ENCODE measurements at regions of chr19 and their contacts with region 1.

Region 1: DNA sequence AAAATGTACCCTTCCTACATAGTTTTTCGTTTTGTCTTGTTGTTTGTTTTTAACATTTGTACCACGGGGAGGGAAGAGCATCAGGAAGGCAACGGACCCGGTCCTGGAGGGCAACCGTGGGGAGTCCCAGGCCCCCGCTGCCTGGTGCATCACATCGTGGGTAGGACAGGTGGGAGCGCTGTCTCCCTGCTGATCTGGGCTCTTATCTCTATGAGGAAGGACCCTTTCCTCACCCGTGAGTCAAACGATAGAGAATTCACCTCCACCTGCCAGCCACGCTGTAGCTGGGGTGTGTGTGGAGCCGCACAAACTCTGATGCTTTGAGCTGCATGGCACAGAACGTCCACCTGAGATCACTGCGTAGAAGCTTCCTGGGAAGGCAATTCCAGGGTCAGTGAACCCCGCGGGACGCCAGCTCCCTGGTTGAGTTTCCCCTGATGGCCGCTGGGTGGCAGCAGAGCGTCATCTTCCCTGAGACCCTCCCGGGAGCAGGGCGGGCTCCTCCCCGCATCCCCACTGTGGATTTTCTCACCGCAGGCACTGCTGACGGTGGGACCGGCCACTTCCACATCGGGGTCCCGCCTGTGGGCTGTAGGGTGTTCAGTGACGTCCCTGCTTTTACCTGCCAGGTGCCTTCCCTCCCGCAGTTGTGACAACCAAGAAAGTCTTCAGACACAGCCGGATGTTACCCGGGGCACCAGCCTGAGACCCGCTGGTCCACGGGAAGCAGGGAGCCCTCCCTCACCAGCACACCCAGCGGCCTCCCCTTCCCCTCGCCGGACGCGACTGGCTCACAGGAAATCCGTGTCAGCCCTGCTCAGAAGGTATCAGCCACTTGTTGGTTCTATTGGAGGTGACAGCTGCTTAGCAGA is 54.7 kb downstream of the ZNF787 start:
- DNase-seq: peak; percentile 84
- CTCF ChIP-seq: peak; percentile 93

Region 2: DNA sequence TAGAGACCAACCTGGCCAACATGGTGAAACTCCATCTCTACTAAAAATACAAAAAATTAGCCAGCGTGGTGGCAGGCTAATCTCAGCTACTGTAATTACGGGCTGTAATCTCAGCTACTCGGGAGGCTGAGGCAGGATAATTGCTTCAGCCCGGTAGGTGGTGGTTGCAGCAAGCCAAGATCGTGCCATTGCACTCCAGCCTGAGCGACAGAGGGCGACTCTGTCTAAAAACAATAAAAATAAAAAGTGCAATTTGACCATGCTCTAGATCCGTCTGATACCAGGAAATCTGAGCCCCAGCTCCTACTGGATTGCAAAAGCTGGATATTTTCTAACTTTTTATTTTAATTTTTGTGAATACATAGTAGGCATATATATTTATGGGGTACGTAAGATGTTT is 99.8 kb before region 1 on chr19:
- CTCF ChIA-PET with region 1: no interaction called
- POLR2A ChIA-PET with region 1: no interaction called
- DNase-seq: no peak
- CTCF ChIP-seq: no peak

Region 3: GRCh38 chr19:56053596-56053995 is 12.8 kb before region 1 on chr19:
- CTCF ChIA-PET with region 1: interaction called, 12 read pairs
- POLR2A ChIA-PET with region 1: no interaction called
- DNase-seq: no peak
- CTCF ChIP-seq: no peak

Region 4: GRCh38 chr19:56104423-56104822 is 38.0 kb after region 1 on chr19:
- CTCF ChIA-PET with region 1: no interaction called
- POLR2A ChIA-PET with region 1: no interaction called
- DNase-seq: no peak
- CTCF ChIP-seq: no peak

Region 5: DNA sequence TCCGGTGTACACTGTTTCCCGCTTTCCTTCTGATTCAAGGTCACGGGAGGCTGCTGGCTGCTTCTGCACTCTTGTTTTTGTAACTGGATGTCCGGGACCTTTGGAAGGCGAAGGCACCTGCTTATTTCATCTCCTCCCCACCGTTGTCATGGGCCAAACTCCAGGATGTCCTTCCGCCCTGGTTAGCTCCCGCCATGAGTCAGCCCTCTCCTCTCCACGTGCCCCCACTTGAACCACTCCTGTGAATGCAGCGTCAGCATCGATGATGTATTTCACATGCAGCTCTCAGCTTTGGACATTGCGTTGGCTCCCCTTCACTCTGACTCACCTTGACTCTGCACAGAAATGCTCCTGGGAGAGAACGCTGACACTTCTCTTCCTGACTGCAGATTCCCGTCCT is 103.9 kb after region 1 on chr19:
- CTCF ChIA-PET with region 1: interaction called, 10 read pairs
- POLR2A ChIA-PET with region 1: no interaction called
- DNase-seq: no peak
- CTCF ChIP-seq: no peak

Region 6: GRCh38 chr19:56350416-56351045 is 284.1 kb after region 1 on chr19:
- CTCF ChIA-PET with region 1: interaction called, 19 read pairs
- POLR2A ChIA-PET with region 1: no interaction called
- DNase-seq: peak; percentile 37
- CTCF ChIP-seq: peak; percentile 82